Activated CD4-positive, alpha-beta T cell treated with anti-CD3 and anti-CD28 coated beads for 36 hours (primary cell): ENCODE measurements at regions of chr11 and their contacts with region 1.

Region 1: GRCh38 chr11:14258221-14258935 is 100.6 kb downstream of the RRAS2 start:
- DNase-seq: no peak
- ATAC-seq: peak; percentile 42
- H3K4me3 Mint-ChIP-seq: no peak overlapping the region
- H3K27ac Mint-ChIP-seq: no peak overlapping the region
- H3K4me1 Mint-ChIP-seq: no peaks in the 10 kb centered on the region
- H3K27me3 Mint-ChIP-seq: no peaks in the 10 kb centered on the region

Region 2: GRCh38 chr11:14242733-14243132 is 15.6 kb before region 1 on chr11:
- CTCF ChIA-PET with region 1: interaction called, 3 read pairs
- POLR2A ChIA-PET with region 1: no interaction called
- intact Hi-C with region 1: loop called in 1 of 2 experiments (anchors 1 kb)
- DNase-seq: no peak
- ATAC-seq: no peak
- H3K4me3 Mint-ChIP-seq: no peak overlapping the region
- H3K27ac Mint-ChIP-seq: no peak overlapping the region
- H3K4me1 Mint-ChIP-seq: peaks cover 2% of the 10 kb centered on the region
- H3K27me3 Mint-ChIP-seq: no peaks in the 10 kb centered on the region